Activated B cell treated with CpG ODN at 0.5 μM for 24 hours (primary cell): ENCODE measurements at regions of chr13 and their contacts with region 1.

Region 1: GRCh38 chr13:80342471-80343380 is 1.8 kb upstream of the SPRY2 start:
- DNase-seq: peak; percentile 74
- ATAC-seq: peak; percentile 50
- H3K4me3 Mint-ChIP-seq: peak overlapping the region; percentile 82
- H3K27ac Mint-ChIP-seq: no peak overlapping the region
- H3K4me1 Mint-ChIP-seq: peaks cover 26% of the 10 kb centered on the region
- H3K27me3 Mint-ChIP-seq: peaks cover 10% of the 10 kb centered on the region
- CTCF ChIP-seq: no peak

Region 2: GRCh38 chr13:79810669-79811068 is 532.1 kb before region 1 on chr13:
- CTCF ChIA-PET with region 1: no interaction called
- POLR2A ChIA-PET with region 1: no interaction called
- intact Hi-C with region 1: loop called (anchors 5 kb)
- DNase-seq: no peak
- ATAC-seq: no peak
- H3K4me3 Mint-ChIP-seq: no peak overlapping the region
- H3K27ac Mint-ChIP-seq: no peak overlapping the region
- H3K4me1 Mint-ChIP-seq: peaks cover 26% of the 10 kb centered on the region
- H3K27me3 Mint-ChIP-seq: no peaks in the 10 kb centered on the region
- CTCF ChIP-seq: no peak

Region 3: GRCh38 chr13:80039000-80039399 is 303.7 kb before region 1 on chr13:
- CTCF ChIA-PET with region 1: no interaction called
- POLR2A ChIA-PET with region 1: no interaction called
- intact Hi-C with region 1: loop called (anchors 2 kb)
- DNase-seq: no peak
- ATAC-seq: peak; percentile 68
- H3K4me3 Mint-ChIP-seq: peak overlapping the region; percentile 24
- H3K27ac Mint-ChIP-seq: no peak overlapping the region
- H3K4me1 Mint-ChIP-seq: peaks cover 29% of the 10 kb centered on the region
- H3K27me3 Mint-ChIP-seq: no peaks in the 10 kb centered on the region
- CTCF ChIP-seq: no peak

Region 4: DNA sequence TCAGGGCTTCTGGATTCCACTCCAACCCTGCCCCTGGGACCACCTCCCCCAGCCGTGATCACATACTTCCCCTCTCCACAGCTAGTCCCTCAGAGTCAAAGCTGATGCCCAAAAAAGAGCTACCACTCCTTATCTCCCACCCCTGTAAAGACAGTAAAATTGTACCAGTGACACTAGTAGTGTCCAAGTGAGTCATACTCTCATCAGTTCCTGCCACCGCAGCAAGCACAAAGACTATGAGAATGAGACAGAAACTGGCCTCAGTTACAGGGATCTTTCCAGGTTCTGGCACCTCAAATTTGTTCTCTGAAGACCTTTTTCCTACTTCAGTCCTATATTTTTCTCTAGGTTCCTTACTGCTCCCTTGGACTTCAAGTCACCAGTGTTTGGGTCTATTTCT is 146.0 kb before region 1 on chr13:
- CTCF ChIA-PET with region 1: no interaction called
- POLR2A ChIA-PET with region 1: no interaction called
- intact Hi-C with region 1: no loop called
- DNase-seq: no peak
- ATAC-seq: no peak
- H3K4me3 Mint-ChIP-seq: no peak overlapping the region
- H3K27ac Mint-ChIP-seq: no peak overlapping the region
- H3K4me1 Mint-ChIP-seq: no peaks in the 10 kb centered on the region
- H3K27me3 Mint-ChIP-seq: no peaks in the 10 kb centered on the region
- CTCF ChIP-seq: no peak

Region 5: GRCh38 chr13:80399340-80400163 is 56.8 kb after region 1 on chr13:
- CTCF ChIA-PET with region 1: interaction called, 5 read pairs
- POLR2A ChIA-PET with region 1: interaction called, 4 read pairs
- intact Hi-C with region 1: loop called (anchors 2 kb)
- DNase-seq: peak; percentile 14
- ATAC-seq: peak; percentile 64
- H3K4me3 Mint-ChIP-seq: peak overlapping the region; percentile 49
- H3K27ac Mint-ChIP-seq: peak overlapping the region; percentile 80
- H3K4me1 Mint-ChIP-seq: peaks cover 44% of the 10 kb centered on the region
- H3K27me3 Mint-ChIP-seq: no peaks in the 10 kb centered on the region
- CTCF ChIP-seq: no peak

Region 6: GRCh38 chr13:80444240-80445015 is 101.7 kb after region 1 on chr13:
- CTCF ChIA-PET with region 1: no interaction called
- POLR2A ChIA-PET with region 1: no interaction called
- intact Hi-C with region 1: loop called (anchors 2 kb)
- DNase-seq: no peak
- ATAC-seq: peak; percentile 37
- H3K4me3 Mint-ChIP-seq: no peak overlapping the region
- H3K27ac Mint-ChIP-seq: no peak overlapping the region
- H3K4me1 Mint-ChIP-seq: peaks cover 58% of the 10 kb centered on the region
- H3K27me3 Mint-ChIP-seq: no peaks in the 10 kb centered on the region
- CTCF ChIP-seq: no peak

Region 7: DNA sequence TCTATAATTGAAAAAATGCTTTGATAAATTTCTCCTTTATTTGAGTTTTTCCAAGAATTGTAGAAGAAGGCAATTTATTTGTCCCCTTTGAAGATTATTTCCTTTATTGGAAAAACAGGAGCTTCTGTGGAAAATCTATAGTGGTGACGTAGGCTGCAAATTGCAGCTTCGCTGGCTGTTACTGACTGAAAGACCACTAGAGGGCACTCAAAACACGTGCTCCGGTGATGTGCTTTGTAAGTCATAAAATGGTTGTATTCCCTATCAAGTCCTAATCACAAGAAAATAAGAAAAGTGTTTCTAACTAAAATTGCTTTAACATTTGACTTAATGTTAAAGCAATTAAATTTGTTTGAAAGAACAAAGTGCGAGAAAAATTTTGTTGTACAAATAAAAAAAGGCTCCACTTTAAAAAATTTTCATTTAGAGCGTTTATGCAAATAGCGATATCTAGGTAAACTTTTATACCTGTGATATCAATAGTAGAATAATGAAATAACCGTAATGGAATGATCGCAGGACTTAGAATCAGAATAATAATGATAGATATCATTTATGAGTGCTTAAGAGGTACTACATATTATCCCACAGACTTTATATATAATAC is 636.4 kb after region 1 on chr13:
- CTCF ChIA-PET with region 1: interaction called, 3 read pairs
- POLR2A ChIA-PET with region 1: no interaction called
- intact Hi-C with region 1: loop called (anchors 5 kb)
- DNase-seq: no peak
- ATAC-seq: no peak
- H3K4me3 Mint-ChIP-seq: no peak overlapping the region
- H3K27ac Mint-ChIP-seq: no peak overlapping the region
- H3K4me1 Mint-ChIP-seq: no peaks in the 10 kb centered on the region
- H3K27me3 Mint-ChIP-seq: no peaks in the 10 kb centered on the region
- CTCF ChIP-seq: no peak